ENCODE measurements at regions of chr7 and their contacts with region 1.

Region 1: GRCh38 chr7:77727936-77728701 is 31.9 kb downstream of the RSBN1L start:
- DNase-seq: peak; percentile 28 to 64 (median 42)
- ATAC-seq: peak; percentile 71
- H3K4me3 ChIP-seq: no peak overlapping the region
- H3K27ac ChIP-seq: peak overlapping the region; percentile 30; the same call in 2 of the 3 replicates
- H3K4me1 ChIP-seq: peaks cover 11 to 24% of the 10 kb centered on the region in 2 experiments; a peak in 4 of 5 replicates
- H3K27me3 ChIP-seq: no peaks in the 10 kb centered on the region
- CTCF ChIP-seq: no peak
- EP300 ChIP-seq: peak; percentile 28; the same call in 1 of the 2 replicates
- POLR2A ChIP-seq: no peak
- RAD21 ChIP-seq: no peak

Region 2: DNA sequence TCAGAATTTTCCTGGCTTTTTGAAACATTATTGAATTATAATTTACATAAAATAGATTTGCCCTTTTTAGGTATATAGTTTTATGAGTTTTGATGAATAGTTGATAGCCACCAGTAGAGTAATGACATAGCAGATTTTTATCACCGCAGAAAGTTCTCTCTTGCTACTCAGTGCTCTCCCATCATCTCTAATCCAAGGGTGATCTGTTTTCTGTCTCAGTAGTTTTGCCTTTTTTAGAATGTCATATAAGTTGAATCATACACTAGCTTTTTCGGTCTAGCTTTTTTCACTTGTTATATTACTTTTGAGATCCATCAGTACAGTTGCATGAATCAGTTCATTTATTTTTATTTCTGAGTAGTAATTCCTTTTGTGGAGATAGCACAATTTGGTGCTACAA is 13.9 kb before region 1 on chr7:
- CTCF ChIA-PET with region 1: no interaction called
- POLR2A ChIA-PET with region 1: interaction called, 11 read pairs
- in situ Hi-C with region 1: no loop called
- intact Hi-C with region 1: no loop called
- DNase-seq: no peak
- ATAC-seq: no peak
- H3K4me3 ChIP-seq: no peak overlapping the region
- H3K27ac ChIP-seq: no peak overlapping the region
- H3K4me1 ChIP-seq: peaks cover 27 to 29% of the 10 kb centered on the region in 2 experiments
- H3K27me3 ChIP-seq: no peaks in the 10 kb centered on the region
- CTCF ChIP-seq: no peak
- EP300 ChIP-seq: no peak
- POLR2A ChIP-seq: no peak
- RAD21 ChIP-seq: no peak

Measured in K562 (cell line).